Activated CD4-positive, alpha-beta T cell treated with anti-CD3 and anti-CD28 coated beads for 36 hours (primary cell): ENCODE measurements at regions of chr14 and their contacts with region 1.

Region 1: GRCh38 chr14:22200977-22201605 is 387.9 kb downstream of the DAD1 start:
- DNase-seq: no peak
- ATAC-seq: peak; percentile 73
- H3K4me3 Mint-ChIP-seq: no peak overlapping the region
- H3K27ac Mint-ChIP-seq: no peak overlapping the region
- H3K4me1 Mint-ChIP-seq: peaks cover 15% of the 10 kb centered on the region
- H3K27me3 Mint-ChIP-seq: no peaks in the 10 kb centered on the region

Region 2: GRCh38 chr14:22168092-22168955 is 32.8 kb before region 1 on chr14:
- CTCF ChIA-PET with region 1: interaction called, 7 read pairs
- POLR2A ChIA-PET with region 1: no interaction called
- intact Hi-C with region 1: loop called in 1 of 2 experiments (anchors 5 kb)
- DNase-seq: no peak
- ATAC-seq: peak; percentile 63
- H3K4me3 Mint-ChIP-seq: peak overlapping the region; percentile 69
- H3K27ac Mint-ChIP-seq: peak overlapping the region; percentile 81
- H3K4me1 Mint-ChIP-seq: peaks cover 4% of the 10 kb centered on the region
- H3K27me3 Mint-ChIP-seq: no peaks in the 10 kb centered on the region

Region 3: DNA sequence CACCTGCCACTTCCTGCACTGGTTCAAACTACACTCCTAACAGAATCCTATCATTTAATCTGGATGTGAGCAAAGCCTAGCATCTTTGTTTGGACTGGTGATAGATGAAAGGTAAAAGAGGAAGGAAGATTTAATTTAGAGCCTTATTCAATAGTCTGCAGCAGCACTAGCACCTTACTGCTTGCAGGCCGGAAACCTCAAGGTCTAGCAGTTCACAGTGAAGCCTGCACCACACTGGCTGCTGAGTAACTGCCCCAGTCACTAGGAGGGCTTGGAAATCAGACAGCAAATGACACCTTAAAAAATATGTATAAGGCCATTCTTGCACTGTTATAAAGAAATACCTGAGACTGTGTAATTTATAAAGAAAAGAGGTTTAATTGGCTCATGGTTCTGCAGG is 29.9 kb after region 1 on chr14:
- CTCF ChIA-PET with region 1: no interaction called
- POLR2A ChIA-PET with region 1: no interaction called
- intact Hi-C with region 1: no loop called
- DNase-seq: peak; percentile 14
- ATAC-seq: peak; percentile 42
- H3K4me3 Mint-ChIP-seq: no peak overlapping the region
- H3K27ac Mint-ChIP-seq: peak overlapping the region; percentile 42
- H3K4me1 Mint-ChIP-seq: peaks cover 3% of the 10 kb centered on the region
- H3K27me3 Mint-ChIP-seq: no peaks in the 10 kb centered on the region